Naive thymus-derived CD8-positive, alpha-beta T cell (primary cell): ENCODE measurements at regions of chr7 and their contacts with region 1.

Region 1: DNA sequence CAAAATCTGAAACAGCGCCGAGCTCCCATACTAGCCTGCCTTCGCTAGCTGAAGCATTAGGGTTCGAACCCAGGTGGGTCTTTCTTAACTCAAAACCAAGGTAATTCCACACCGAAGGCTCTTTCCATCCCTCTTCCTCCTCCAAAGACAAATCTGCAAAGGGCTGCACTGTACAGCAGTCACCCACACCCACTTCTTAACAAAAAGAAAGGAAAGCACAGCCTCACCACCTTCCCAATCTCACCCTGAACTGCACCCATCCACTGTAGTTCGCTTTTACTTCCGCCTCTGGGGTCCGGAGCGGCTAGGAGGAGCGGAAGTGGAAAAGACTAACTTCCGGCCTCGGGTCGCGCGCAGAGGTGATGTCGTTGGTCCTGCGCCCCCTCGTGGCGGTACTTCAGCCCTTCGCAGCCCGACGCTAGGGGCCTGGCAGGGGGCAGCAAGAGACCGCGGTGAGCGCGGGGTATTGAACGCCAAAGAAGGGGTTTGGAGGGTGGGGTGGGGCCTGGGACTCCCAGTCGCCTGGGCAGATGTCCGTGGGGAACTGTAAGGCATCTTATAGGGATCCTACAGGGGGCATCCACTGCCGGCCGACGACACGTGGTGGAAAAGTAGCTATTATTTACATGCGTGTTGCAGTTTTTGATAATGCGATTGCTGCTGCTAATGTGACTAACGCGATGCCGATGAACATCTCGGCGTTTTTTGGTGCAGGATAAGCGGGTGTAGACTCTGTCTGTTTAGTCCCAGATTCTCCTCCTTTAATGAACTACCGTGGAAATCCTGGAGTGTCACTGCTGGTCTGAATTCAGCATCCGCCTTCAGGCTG is at the start of gene MTERF1:
- DNase-seq: peak; percentile 83 to 95 (median 92)
- ATAC-seq: peak; percentile 95 to 96
- H3K4me3 Mint-ChIP-seq: peak within 1 kb of the TSS; percentile 82 to 100 (median 96)
- H3K27ac Mint-ChIP-seq: peak within 1 kb of the TSS; percentile 85 to 99 (median 96)
- H3K4me1 Mint-ChIP-seq: peaks cover 20 to 46% (median 44%) of the 10 kb centered on the region in 4 donors
- H3K27me3 Mint-ChIP-seq: peaks cover 0 to 2% (median 0%) of the 10 kb centered on the region in 5 donors
- polyA plus RNA-seq, gene MTERF1: 8.0 to 12.1 (median 9.7) TPM

Region 2: GRCh38 chr7:91940572-91941341 is 60.1 kb after region 1 on chr7 and contains the start of gene AKAP9:
- POLR2A ChIA-PET with region 1: interaction called, 23 read pairs
- DNase-seq: peak; percentile 77 to 92 (median 87)
- ATAC-seq: peak; percentile 87 to 89
- H3K4me3 Mint-ChIP-seq: peak within 1 kb of the TSS; percentile 91 to 100 (median 96)
- H3K27ac Mint-ChIP-seq: peak within 1 kb of the TSS; percentile 90 to 100 (median 98)
- H3K4me1 Mint-ChIP-seq: peaks cover 16 to 54% (median 44%) of the 10 kb centered on the region in 4 donors
- H3K27me3 Mint-ChIP-seq: no peaks in the 10 kb centered on the region
- polyA plus RNA-seq, gene AKAP9: 11.1 to 40.8 (median 20.4) TPM